K562 (cell line): ENCODE measurements at regions of chr9 and their contacts with region 1.

Region 1: GRCh38 chr9:37350486-37351190 is 71.9 kb upstream of the GRHPR start:
- DNase-seq: no peak
- ATAC-seq: no peak
- H3K4me3 ChIP-seq: no peak overlapping the region
- H3K27ac ChIP-seq: no peak overlapping the region
- H3K4me1 ChIP-seq: no peaks in the 10 kb centered on the region; a peak in 1 of 5 replicates
- H3K27me3 ChIP-seq: no peaks in the 10 kb centered on the region
- CTCF ChIP-seq: no peak
- EP300 ChIP-seq: no peak
- POLR2A ChIP-seq: no peak
- RAD21 ChIP-seq: no peak

Region 2: GRCh38 chr9:37096628-37097027 is 254.0 kb before region 1 on chr9:
- CTCF ChIA-PET with region 1: no interaction called
- POLR2A ChIA-PET with region 1: no interaction called
- in situ Hi-C with region 1: no loop called
- intact Hi-C with region 1: no loop called
- DNase-seq: no peak
- ATAC-seq: no peak
- H3K4me3 ChIP-seq: no peak overlapping the region
- H3K27ac ChIP-seq: no peak overlapping the region
- H3K4me1 ChIP-seq: no peaks in the 10 kb centered on the region
- H3K27me3 ChIP-seq: no peaks in the 10 kb centered on the region
- CTCF ChIP-seq: no peak
- EP300 ChIP-seq: no peak
- POLR2A ChIP-seq: no peak
- RAD21 ChIP-seq: no peak

Region 3: GRCh38 chr9:37293664-37294524 is 56.7 kb before region 1 on chr9:
- CTCF ChIA-PET with region 1: no interaction called
- POLR2A ChIA-PET with region 1: no interaction called
- in situ Hi-C with region 1: no loop called
- intact Hi-C with region 1: no loop called
- DNase-seq: peak in 1 of 4 experiments; percentile 18
- ATAC-seq: no peak; the same call in 1 of the 3 replicates
- H3K4me3 ChIP-seq: no peak overlapping the region
- H3K27ac ChIP-seq: peak overlapping the region; percentile 4; the same call in 1 of the 3 replicates
- H3K4me1 ChIP-seq: peaks cover 0 to 33% of the 10 kb centered on the region in 2 experiments; a peak in 4 of 5 replicates
- H3K27me3 ChIP-seq: no peaks in the 10 kb centered on the region
- CTCF ChIP-seq: no peak
- EP300 ChIP-seq: no peak
- POLR2A ChIP-seq: no peak
- RAD21 ChIP-seq: no peak

Region 4: GRCh38 chr9:37337301-37337890 is 13.2 kb before region 1 on chr9:
- CTCF ChIA-PET with region 1: no interaction called
- POLR2A ChIA-PET with region 1: interaction called, 11 read pairs
- in situ Hi-C with region 1: no loop called
- intact Hi-C with region 1: no loop called
- DNase-seq: peak; percentile 68 to 89 (median 80)
- ATAC-seq: peak; percentile 78
- H3K4me3 ChIP-seq: no peak overlapping the region
- H3K27ac ChIP-seq: peak overlapping the region; percentile 47
- H3K4me1 ChIP-seq: peaks cover 0 to 30% of the 10 kb centered on the region in 2 experiments; a peak in 3 of 5 replicates
- H3K27me3 ChIP-seq: no peaks in the 10 kb centered on the region
- CTCF ChIP-seq: no peak
- EP300 ChIP-seq: peak; percentile 48; the same call in 1 of the 2 replicates
- POLR2A ChIP-seq: no peak
- RAD21 ChIP-seq: no peak

Region 5: GRCh38 chr9:37390759-37391158 is 40.1 kb after region 1 on chr9:
- CTCF ChIA-PET with region 1: no interaction called
- POLR2A ChIA-PET with region 1: interaction called, 3 read pairs
- in situ Hi-C with region 1: no loop called
- intact Hi-C with region 1: loop called (anchors 1 kb)
- DNase-seq: peak; percentile 59 to 80 (median 66)
- ATAC-seq: peak; percentile 79
- H3K4me3 ChIP-seq: no peak overlapping the region
- H3K27ac ChIP-seq: no peak overlapping the region
- H3K4me1 ChIP-seq: peaks cover 7 to 8% of the 10 kb centered on the region in 2 experiments; a peak in 2 of 5 replicates
- H3K27me3 ChIP-seq: 0 out of 5 replicates have a peak, but pooled peaks cover 0 to 4% of the 10 kb centered on the region in 2 experiments
- CTCF ChIP-seq: peak; percentile 82 to 84 (median 83)
- EP300 ChIP-seq: no peak
- POLR2A ChIP-seq: no peak
- RAD21 ChIP-seq: peak; percentile 40 to 76; a peak in 3 of 4 replicates